Naive thymus-derived CD4-positive, alpha-beta T cell (primary cell): ENCODE measurements at regions of chr17 and their contacts with region 1.

Region 1: GRCh38 chr17:28812091-28812747 is 30.4 kb downstream of the FAM222B start:
- DNase-seq: peak; percentile 91 to 97 (median 95)
- ATAC-seq: peak; percentile 100
- H3K4me3 ChIP-seq: peak overlapping the region; percentile 85
- H3K4me3 Mint-ChIP-seq: peak overlapping the region; percentile 87 to 99 (median 92)
- H3K27ac ChIP-seq: peak overlapping the region; percentile 96
- H3K27ac Mint-ChIP-seq: peak overlapping the region; percentile 82 to 100 (median 97)
- H3K4me1 ChIP-seq: peaks cover 0 to 16% of the 10 kb centered on the region in 2 donors
- H3K4me1 Mint-ChIP-seq: peaks cover 21 to 49% (median 40%) of the 10 kb centered on the region in 7 donors
- H3K27me3 ChIP-seq: no peaks in the 10 kb centered on the region
- H3K27me3 Mint-ChIP-seq: no peaks in the 10 kb centered on the region

Region 2: DNA sequence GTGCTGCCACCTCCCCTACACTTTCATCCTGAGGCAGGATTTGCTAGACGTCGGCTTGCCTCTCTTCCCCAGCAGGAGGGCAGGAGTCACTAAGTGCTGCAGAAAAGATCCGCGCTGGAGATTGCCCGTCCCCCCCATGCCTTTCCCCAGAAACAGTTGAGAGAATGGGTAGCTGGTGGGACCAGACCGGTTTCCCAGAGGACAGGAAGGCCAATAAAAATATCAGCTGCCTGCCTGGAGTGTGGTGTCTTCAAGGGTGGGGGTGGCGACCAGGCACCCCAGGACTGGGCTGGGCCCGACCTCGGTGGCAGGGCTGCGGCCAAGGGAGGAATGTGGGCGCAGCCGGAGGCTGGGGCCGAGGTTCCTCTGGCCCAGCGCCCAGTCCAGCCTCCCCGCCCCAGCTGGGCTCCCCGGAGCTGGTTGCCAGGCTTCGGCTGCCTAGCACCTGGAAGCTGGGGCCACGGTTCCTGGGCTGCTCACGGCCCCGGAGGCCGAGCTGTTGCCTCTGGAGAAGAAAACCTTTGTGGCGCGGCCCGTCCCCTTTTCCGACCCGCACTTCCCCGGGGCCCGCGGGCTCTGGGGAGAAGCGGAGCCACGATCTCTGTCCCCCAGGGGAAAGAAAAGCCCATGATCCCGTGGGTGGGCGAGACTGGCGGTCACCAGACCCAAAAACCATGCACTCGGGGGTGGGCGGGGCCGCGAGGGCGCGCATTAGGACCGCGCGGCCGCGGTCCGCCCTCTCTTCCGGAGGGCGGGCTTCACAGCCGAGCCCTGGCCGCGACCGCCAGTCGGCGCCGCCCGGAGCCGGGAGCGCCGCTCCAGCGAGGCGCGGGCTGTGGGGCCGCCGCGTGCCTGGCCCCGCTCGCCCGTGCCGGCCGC is 68.8 kb before region 1 on chr17 and contains the start of gene TRAF4:
- CTCF ChIA-PET with region 1: no interaction called
- POLR2A ChIA-PET with region 1: no interaction called
- intact Hi-C with region 1: loop called in 1 of 2 experiments (anchors 1 kb)
- DNase-seq: peak; percentile 60 to 86 (median 73)
- ATAC-seq: peak; percentile 93
- H3K4me3 ChIP-seq: peak within 1 kb of the TSS; percentile 82
- H3K4me3 Mint-ChIP-seq: peak within 1 kb of the TSS; percentile 87 to 94 (median 91)
- H3K27ac ChIP-seq: peak within 1 kb of the TSS; percentile 83
- H3K27ac Mint-ChIP-seq: peak within 1 kb of the TSS; percentile 78 to 95 (median 92)
- H3K4me1 ChIP-seq: peaks cover 11 to 28% of the 10 kb centered on the region in 2 donors
- H3K4me1 Mint-ChIP-seq: peaks cover 2 to 42% (median 27%) of the 10 kb centered on the region in 7 donors
- H3K27me3 ChIP-seq: no peaks in the 10 kb centered on the region
- H3K27me3 Mint-ChIP-seq: no peaks in the 10 kb centered on the region
- total RNA-seq, gene TRAF4: 22.3 to 228 (median 81.6) TPM

Region 3: DNA sequence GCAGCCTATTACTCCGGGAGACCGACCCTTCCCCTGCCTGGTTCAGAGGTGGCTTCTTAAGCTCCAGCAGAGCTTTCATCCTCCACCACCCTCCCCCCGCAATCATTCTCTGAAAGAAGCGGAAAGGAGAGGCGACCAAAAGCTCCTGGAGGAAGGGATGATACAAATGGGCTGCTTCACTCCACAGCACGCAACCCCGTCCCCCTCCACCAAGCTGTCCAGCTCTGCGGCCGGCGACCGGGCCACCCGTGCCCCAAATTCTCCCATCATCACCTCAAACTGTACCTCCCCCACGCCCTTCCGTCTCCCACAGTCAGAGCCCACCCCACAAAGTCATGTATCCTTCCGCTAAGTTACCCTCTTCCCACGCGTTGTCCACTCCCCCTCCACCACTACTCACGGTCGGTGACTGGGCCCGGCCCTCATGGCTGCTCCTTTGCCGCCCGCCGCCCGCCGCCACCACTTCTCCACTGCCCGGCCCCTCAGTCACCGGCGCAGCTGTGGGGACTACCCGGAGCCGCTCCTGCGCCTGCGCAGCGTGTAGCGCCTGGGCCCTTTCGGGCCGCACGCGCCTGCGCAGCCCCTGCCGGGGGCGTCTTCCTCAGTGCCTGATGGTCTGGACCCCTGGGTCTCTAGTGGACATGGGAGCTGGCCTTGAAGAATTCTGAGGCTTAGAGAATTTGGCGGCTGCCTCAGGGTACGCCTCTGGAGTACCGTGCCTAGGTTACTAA is 30.2 kb after region 1 on chr17 and contains the start of gene FAM222B:
- CTCF ChIA-PET with region 1: no interaction called
- POLR2A ChIA-PET with region 1: interaction called, 6 read pairs
- intact Hi-C with region 1: loop called (anchors 1 kb)
- DNase-seq: peak; percentile 80 to 91 (median 86)
- ATAC-seq: peak; percentile 98
- H3K4me3 ChIP-seq: peak within 1 kb of the TSS; percentile 77
- H3K4me3 Mint-ChIP-seq: peak within 1 kb of the TSS; percentile 96 to 100 (median 98)
- H3K27ac ChIP-seq: peak within 1 kb of the TSS; percentile 78
- H3K27ac Mint-ChIP-seq: peak within 1 kb of the TSS; percentile 83 to 97 (median 92)
- H3K4me1 ChIP-seq: peaks cover 8 to 13% of the 10 kb centered on the region in 2 donors
- H3K4me1 Mint-ChIP-seq: peaks cover 6 to 31% (median 26%) of the 10 kb centered on the region in 7 donors
- H3K27me3 ChIP-seq: no peaks in the 10 kb centered on the region
- H3K27me3 Mint-ChIP-seq: no peaks in the 10 kb centered on the region
- total RNA-seq, gene FAM222B: 16.5 to 24.4 (median 22.3) TPM